ENCODE measurements at regions of chr22 and their contacts with region 1.

Region 1: GRCh38 chr22:43884600-43885325 is 7.0 kb downstream of the PNPLA5 start:
- DNase-seq: peak; percentile 56
- H3K4me3 ChIP-seq: no peak overlapping the region
- H3K27ac ChIP-seq: no peak overlapping the region
- H3K4me1 ChIP-seq: peaks cover 8% of the 10 kb centered on the region
- CTCF ChIP-seq: peak; percentile 85

Region 2: DNA sequence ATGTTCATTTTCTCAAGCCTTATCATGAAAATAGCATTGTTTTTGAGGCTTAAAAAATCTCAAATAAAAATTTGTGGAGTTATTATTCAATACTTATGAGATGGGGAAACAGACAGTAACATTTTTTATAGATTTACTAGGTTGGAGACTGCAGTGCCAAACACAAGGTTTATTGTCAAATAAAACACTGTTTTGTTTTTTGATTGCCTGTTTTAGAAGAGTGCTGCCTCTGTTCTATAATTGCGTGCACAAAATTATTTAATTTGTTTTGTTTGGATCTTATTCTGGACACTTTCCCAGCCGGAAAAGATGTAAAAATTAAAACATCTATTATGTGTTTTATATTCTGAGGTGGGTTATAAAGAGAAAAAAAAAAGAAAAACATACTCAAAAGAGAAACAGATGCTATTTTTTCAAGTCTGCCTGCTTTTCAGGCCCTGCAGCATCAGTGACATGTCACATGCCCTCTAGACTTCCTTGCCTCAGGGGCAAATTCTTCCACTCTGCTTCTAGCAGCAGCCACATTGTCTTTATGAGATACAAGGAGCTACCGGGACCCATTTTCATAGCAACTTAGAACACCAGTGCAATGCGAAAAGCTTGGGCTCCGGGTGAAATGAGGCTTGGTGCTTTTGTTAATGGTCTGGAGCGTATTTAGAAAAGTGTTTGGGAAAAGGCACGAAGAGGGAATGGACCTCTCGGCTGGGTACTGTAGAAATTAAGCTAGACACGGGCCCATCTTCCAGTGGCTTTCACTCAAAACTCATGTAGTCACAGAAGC is 150.2 kb before region 1 on chr22:
- CTCF ChIA-PET with region 1: no interaction called
- POLR2A ChIA-PET with region 1: no interaction called
- intact Hi-C with region 1: no loop called
- DNase-seq: no peak
- H3K4me3 ChIP-seq: no peak overlapping the region
- H3K27ac ChIP-seq: no peak overlapping the region
- H3K4me1 ChIP-seq: no peaks in the 10 kb centered on the region
- CTCF ChIP-seq: no peak

Region 3: DNA sequence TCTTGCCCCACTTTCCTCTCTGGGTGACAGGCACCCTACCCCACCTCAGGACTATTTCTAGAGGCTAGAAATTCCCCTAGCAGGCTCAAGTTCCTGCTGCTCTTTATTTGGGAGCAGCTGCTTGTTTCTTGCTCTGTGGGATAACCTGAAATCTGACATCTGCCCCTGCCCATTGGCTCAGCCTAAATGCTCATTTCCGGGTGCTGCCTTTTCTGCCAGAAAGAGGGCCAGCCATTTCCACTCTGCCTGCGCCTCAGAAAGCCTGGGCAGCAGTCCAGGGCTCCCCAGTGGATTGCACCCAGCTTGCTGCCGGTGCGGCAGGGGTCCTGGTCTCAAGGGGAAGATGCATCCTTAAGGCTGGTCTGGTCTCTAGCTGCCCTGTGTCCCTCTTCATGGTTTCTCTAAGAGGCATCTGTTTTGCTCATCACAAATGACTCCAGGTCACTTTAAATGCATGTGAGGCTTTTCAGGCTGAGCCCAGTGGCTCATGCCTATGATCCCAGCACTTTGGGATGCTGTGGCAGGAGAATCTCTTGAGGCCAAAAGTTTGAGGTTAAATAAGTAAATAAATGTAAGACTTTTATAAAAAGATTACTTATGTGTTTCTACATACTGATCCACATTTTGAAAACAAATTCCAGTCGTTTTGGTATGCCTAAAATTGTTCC is 17.3 kb after region 1 on chr22:
- CTCF ChIA-PET with region 1: no interaction called
- POLR2A ChIA-PET with region 1: no interaction called
- intact Hi-C with region 1: loop called (anchors 2 kb)
- DNase-seq: no peak
- H3K4me3 ChIP-seq: no peak overlapping the region
- H3K27ac ChIP-seq: no peak overlapping the region
- H3K4me1 ChIP-seq: no peaks in the 10 kb centered on the region
- CTCF ChIP-seq: no peak

Region 4: DNA sequence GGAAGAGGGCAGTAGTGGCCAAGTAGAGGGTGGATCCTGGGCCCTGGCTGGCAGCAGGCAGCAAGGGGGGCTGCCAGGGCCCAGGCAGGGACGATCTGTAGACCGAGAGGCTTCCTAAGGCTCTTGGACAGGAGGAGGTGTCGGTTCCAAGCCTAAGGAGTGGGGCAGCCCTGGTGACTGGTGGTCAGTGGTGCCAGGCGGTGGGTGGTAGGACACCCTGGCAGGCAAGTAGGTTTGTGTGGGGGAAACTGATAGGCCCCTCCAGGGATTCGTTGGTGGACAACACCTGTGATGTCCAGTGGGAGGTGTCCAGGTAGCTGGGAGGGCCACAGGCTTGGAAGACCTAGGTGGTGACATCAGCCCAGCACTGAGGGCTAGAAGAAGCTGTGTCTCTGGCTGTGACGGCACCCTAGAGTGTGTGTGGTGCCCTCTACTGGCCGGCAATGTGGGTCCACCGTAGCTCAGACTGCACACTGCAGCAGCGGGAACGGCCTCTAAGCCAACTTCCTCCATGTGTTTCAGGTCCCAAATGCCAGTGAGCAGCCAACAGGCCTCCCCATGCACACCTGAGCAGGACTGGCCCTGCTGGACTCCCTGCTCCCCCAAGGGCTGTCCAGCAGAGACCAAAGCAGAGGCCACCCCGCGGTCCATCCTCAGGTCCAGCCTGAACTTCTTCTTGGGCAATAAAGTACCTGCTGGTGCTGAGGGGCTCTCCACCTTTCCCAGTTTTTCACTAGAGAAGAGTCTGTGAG is 61.0 kb after region 1 on chr22:
- CTCF ChIA-PET with region 1: interaction called, 4 read pairs
- POLR2A ChIA-PET with region 1: no interaction called
- intact Hi-C with region 1: loop called (anchors 1 kb)
- DNase-seq: peak; percentile 72
- H3K4me3 ChIP-seq: no peak overlapping the region
- H3K27ac ChIP-seq: no peak overlapping the region
- H3K4me1 ChIP-seq: no peaks in the 10 kb centered on the region
- CTCF ChIP-seq: peak; percentile 81

Region 5: GRCh38 chr22:44020981-44021380 is 136.2 kb after region 1 on chr22:
- CTCF ChIA-PET with region 1: no interaction called
- POLR2A ChIA-PET with region 1: no interaction called
- intact Hi-C with region 1: no loop called
- DNase-seq: no peak
- H3K4me3 ChIP-seq: no peak overlapping the region
- H3K27ac ChIP-seq: no peak overlapping the region
- H3K4me1 ChIP-seq: peaks cover 9% of the 10 kb centered on the region
- CTCF ChIP-seq: no peak